ENCODE measurements at regions of chr20 and their contacts with region 1.

Region 1: GRCh38 chr20:1894951-1895673 is at the start of gene SIRPA:
- DNase-seq: peak; percentile 77
- ATAC-seq: peak; percentile 69
- total RNA-seq, gene SIRPA: 19.5 TPM

Region 2: DNA sequence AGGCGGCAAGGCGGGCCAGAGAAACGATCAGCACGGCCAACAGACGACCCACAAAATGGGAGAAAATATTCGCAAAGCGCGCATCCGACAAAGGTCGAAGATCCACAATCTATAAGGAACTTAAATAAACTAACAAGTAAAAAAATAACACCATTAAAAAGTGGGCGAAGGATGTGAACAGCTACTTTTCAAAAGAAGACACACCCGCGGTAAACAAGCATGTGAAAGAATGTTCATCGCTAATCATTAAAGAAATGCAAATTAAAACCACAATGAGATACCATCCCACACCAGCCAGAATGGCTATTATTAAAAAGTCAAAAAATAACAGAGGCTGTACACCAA is 117.7 kb before region 1 on chr20:
- intact Hi-C with region 1: no loop called
- DNase-seq: no peak
- ATAC-seq: no peak

Region 3: DNA sequence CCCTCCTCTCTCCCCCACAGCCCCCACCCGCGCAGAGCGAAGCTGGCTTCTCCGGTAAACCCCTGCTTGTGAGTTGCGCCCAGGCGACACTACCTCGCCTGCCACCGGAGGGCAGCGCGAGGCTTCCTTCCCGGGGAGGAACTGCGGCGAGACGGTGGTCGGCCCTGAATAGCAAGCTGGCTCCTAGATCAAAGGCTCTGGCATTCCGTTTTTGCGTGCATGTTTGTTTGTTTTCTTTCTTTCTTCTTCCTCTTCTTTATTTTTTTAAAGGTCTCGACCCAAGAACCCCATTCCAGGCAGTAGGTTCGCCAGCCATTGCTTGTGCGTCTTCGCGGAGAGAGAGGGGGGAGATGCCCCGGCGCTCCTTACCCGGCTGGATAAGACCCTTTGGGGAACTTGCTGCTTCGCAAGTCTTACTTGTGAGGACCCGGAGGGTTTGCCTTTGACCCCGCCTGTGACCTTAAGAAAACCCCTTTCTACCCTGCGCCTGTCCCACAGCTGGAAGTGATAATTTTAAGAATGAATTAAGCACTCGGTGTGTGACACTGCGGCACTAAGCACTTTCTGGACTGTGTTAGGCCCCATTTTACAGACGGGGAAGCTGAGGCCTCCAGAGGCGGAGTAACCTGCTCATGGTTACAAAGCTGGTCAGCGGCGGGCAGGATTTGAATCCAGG is 92.6 kb before region 1 on chr20:
- intact Hi-C with region 1: loop called (anchors 5 kb)
- DNase-seq: peak; percentile 83
- ATAC-seq: peak; percentile 89

Region 4: DNA sequence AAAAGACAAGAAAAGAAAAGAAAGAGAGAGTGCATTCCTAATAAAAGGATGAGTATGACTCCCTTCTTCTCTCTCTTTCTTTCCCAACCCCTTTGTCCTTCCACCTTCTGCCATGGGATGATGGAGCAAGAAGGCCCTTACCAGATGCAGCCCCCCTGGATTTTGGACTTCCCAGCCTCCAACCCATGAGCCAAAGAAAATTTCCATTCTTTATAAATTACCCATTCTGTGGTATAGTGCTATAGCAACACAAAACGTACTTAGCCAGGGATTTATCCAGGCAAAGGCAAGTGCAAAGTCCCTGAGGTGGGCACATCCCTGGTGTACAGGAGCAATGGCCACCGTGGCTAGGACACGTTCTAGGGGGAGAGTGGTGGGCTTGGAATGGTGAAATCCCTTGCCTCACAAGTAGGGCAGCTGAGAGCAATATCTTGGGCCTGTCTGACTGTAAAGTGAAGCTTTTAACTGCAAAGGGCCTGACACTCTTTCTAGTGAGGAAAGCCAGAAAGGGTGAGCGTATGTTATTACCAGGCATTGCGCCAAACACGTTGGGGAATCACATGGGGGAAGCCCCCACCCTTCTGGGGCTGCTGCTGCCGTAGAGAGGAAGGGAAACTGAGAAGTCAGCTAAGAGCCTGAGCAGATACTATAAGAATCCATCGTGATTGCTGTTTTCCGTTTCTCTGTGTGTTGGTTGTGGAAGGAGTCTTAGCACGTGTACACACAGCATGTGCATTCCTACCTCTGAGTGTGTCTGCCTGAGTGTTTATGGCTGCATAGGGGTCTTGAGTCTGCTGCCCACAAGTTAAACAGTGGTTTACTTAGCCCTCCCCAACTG is 50.6 kb before region 1 on chr20:
- intact Hi-C with region 1: no loop called
- DNase-seq: peak; percentile 58
- ATAC-seq: peak; percentile 78